ENCODE measurements at regions of chr6 and their contacts with region 1.

Region 1: GRCh38 chr6:72411872-72412708 is 209.8 kb upstream of the KCNQ5 start:
- DNase-seq: peak; percentile 57 to 87 (median 73)
- ATAC-seq: peak; percentile 98
- H3K4me3 ChIP-seq: no peak overlapping the region
- H3K4me3 Mint-ChIP-seq: no peak overlapping the region
- H3K27ac ChIP-seq: no peak overlapping the region
- H3K27ac Mint-ChIP-seq: no peak overlapping the region
- H3K4me1 ChIP-seq: no peaks in the 10 kb centered on the region
- H3K4me1 Mint-ChIP-seq: no peaks in the 10 kb centered on the region
- H3K27me3 ChIP-seq: no peaks in the 10 kb centered on the region
- H3K27me3 Mint-ChIP-seq: peaks cover 8% of the 10 kb centered on the region
- CTCF ChIP-seq: peak; percentile 100

Region 2: GRCh38 chr6:72440611-72441010 is 28.5 kb after region 1 on chr6:
- CTCF ChIA-PET with region 1: no interaction called
- POLR2A ChIA-PET with region 1: no interaction called
- intact Hi-C with region 1: no loop called
- DNase-seq: no peak
- ATAC-seq: no peak
- H3K4me3 ChIP-seq: no peak overlapping the region
- H3K4me3 Mint-ChIP-seq: no peak overlapping the region
- H3K27ac ChIP-seq: no peak overlapping the region
- H3K27ac Mint-ChIP-seq: no peak overlapping the region
- H3K4me1 ChIP-seq: no peaks in the 10 kb centered on the region
- H3K4me1 Mint-ChIP-seq: no peaks in the 10 kb centered on the region
- H3K27me3 ChIP-seq: peaks cover 0 to 3% of the 10 kb centered on the region in 2 experiments
- H3K27me3 Mint-ChIP-seq: peaks cover 14% of the 10 kb centered on the region
- CTCF ChIP-seq: no peak

Region 3: GRCh38 chr6:72616406-72617015 is 204.4 kb after region 1 on chr6:
- CTCF ChIA-PET with region 1: interaction called, 20 read pairs
- POLR2A ChIA-PET with region 1: no interaction called
- intact Hi-C with region 1: loop called (anchors 1 to 5 kb)
- DNase-seq: peak in 2 of 9 experiments; percentile 50 to 67
- ATAC-seq: no peak
- H3K4me3 ChIP-seq: no peak overlapping the region
- H3K4me3 Mint-ChIP-seq: no peak overlapping the region
- H3K27ac ChIP-seq: no peak overlapping the region
- H3K27ac Mint-ChIP-seq: peak overlapping the region; percentile 68
- H3K4me1 ChIP-seq: peaks cover 19% of the 10 kb centered on the region
- H3K4me1 Mint-ChIP-seq: peaks cover 51% of the 10 kb centered on the region
- H3K27me3 ChIP-seq: no peaks in the 10 kb centered on the region
- H3K27me3 Mint-ChIP-seq: no peaks in the 10 kb centered on the region
- CTCF ChIP-seq: peak; percentile 71

Region 4: DNA sequence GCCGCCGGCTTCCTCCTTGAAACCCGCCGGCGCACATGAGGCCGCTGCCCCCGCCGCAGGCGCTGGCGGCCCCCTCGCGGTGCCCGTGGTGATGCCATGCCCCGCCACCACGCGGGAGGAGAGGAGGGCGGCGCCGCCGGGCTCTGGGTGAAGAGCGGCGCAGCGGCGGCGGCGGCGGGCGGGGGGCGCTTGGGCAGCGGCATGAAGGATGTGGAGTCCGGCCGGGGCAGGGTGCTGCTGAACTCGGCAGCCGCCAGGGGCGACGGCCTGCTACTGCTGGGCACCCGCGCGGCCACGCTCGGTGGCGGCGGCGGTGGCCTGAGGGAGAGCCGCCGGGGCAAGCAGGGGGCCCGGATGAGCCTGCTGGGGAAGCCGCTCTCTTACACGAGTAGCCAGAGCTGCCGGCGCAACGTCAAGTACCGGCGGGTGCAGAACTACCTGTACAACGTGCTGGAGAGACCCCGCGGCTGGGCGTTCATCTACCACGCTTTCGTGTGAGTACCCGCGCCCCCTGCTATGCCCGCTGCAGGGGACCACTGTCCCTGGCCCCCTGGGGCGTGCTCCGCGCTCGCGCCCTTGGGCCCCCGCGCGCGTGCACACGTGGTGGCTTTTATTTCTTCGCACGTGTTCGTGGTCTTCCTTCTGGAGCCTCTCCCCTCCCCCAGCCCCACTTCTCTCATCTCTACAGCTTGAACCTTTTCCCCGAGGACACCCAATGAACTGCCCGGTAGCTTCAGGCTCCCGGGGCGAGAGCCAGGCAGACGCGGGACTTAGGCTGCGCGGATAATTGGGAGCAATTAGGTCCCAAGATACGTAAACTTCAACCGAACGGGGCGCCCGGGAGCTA is 210.2 kb after region 1 on chr6:
- CTCF ChIA-PET with region 1: interaction called, 20 read pairs
- POLR2A ChIA-PET with region 1: no interaction called
- intact Hi-C with region 1: loop called in 1 of 2 experiments (anchors 5 kb)
- DNase-seq: peak; percentile 34 to 82 (median 59)
- ATAC-seq: peak; percentile 42
- H3K4me3 ChIP-seq: peak overlapping the region; percentile 79 to 80
- H3K4me3 Mint-ChIP-seq: peak overlapping the region; percentile 96
- H3K27ac ChIP-seq: peak overlapping the region in 1 of 2 experiments; percentile 17
- H3K27ac Mint-ChIP-seq: peak overlapping the region; percentile 19
- H3K4me1 ChIP-seq: peaks cover 21% of the 10 kb centered on the region
- H3K4me1 Mint-ChIP-seq: peaks cover 57% of the 10 kb centered on the region
- H3K27me3 ChIP-seq: no peaks in the 10 kb centered on the region
- H3K27me3 Mint-ChIP-seq: no peaks in the 10 kb centered on the region
- CTCF ChIP-seq: peak; percentile 15

Region 5: GRCh38 chr6:72661411-72661810 is 249.3 kb after region 1 on chr6:
- CTCF ChIA-PET with region 1: no interaction called
- POLR2A ChIA-PET with region 1: no interaction called
- intact Hi-C with region 1: no loop called
- DNase-seq: no peak
- ATAC-seq: no peak
- H3K4me3 ChIP-seq: no peak overlapping the region
- H3K4me3 Mint-ChIP-seq: no peak overlapping the region
- H3K27ac ChIP-seq: no peak overlapping the region
- H3K27ac Mint-ChIP-seq: no peak overlapping the region
- H3K4me1 ChIP-seq: no peaks in the 10 kb centered on the region
- H3K4me1 Mint-ChIP-seq: no peaks in the 10 kb centered on the region
- H3K27me3 ChIP-seq: no peaks in the 10 kb centered on the region
- H3K27me3 Mint-ChIP-seq: no peaks in the 10 kb centered on the region
- CTCF ChIP-seq: no peak

Region 6: DNA sequence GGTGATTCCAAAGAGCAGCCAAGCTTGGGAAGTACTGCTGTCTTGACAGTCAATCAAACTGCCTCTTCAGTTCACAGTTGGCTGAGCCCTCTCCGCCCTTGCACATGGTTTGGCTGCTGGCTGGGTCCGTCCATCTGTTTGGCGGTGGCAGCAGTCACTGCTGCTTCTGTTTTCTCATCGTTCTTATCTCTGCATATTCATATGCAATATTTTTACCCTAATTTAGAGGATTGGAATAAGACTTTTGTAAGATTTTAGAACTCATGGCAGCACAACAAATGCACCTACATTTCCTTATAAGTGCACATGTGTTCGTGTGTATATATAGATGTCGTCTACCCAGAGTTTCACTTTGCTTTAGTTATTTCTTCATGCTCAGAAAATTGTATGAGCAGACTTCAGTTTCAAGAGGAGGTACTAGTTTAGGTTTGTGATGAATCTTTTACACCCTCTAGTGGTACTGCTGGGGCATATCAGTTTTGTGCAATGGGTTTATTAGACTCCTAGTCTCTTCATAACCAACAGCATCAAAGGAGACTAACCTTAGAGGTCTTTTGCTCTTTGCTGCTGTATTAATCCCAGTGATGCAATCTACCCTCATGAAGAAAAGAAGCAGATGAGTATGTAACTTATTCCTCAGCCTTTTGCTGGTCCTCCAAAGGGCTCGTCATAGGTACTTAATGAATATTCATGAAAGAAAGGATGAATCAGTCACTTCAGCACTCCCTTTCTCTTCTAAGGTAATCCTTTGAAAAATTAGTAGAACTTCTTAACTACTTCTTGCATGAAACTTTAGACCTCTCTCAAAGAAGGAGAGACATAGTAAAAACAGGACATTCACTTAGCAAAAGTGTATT is 768.9 kb after region 1 on chr6:
- CTCF ChIA-PET with region 1: interaction called, 9 read pairs
- POLR2A ChIA-PET with region 1: no interaction called
- intact Hi-C with region 1: loop called (anchors 1 to 2 kb)
- DNase-seq: peak in 2 of 9 experiments; percentile 49 to 61
- ATAC-seq: peak; percentile 82
- H3K4me3 ChIP-seq: no peak overlapping the region
- H3K4me3 Mint-ChIP-seq: peak overlapping the region; percentile 47
- H3K27ac ChIP-seq: no peak overlapping the region
- H3K27ac Mint-ChIP-seq: no peak overlapping the region
- H3K4me1 ChIP-seq: no peaks in the 10 kb centered on the region
- H3K4me1 Mint-ChIP-seq: peaks cover 4% of the 10 kb centered on the region
- H3K27me3 ChIP-seq: no peaks in the 10 kb centered on the region
- H3K27me3 Mint-ChIP-seq: no peaks in the 10 kb centered on the region
- CTCF ChIP-seq: peak; percentile 66

Region 7: GRCh38 chr6:73435236-73435635 is 1023.1 kb after region 1 on chr6:
- CTCF ChIA-PET with region 1: no interaction called
- POLR2A ChIA-PET with region 1: no interaction called
- intact Hi-C with region 1: loop called in 1 of 2 experiments (anchors 5 kb)
- DNase-seq: no peak
- ATAC-seq: no peak
- H3K4me3 ChIP-seq: no peak overlapping the region
- H3K4me3 Mint-ChIP-seq: no peak overlapping the region
- H3K27ac ChIP-seq: no peak overlapping the region
- H3K27ac Mint-ChIP-seq: no peak overlapping the region
- H3K4me1 ChIP-seq: no peaks in the 10 kb centered on the region
- H3K4me1 Mint-ChIP-seq: peaks cover 2% of the 10 kb centered on the region
- H3K27me3 ChIP-seq: no peaks in the 10 kb centered on the region
- H3K27me3 Mint-ChIP-seq: no peaks in the 10 kb centered on the region
- CTCF ChIP-seq: no peak